ENCODE measurements at regions of chr7 and their contacts with region 1.

Region 1: DNA sequence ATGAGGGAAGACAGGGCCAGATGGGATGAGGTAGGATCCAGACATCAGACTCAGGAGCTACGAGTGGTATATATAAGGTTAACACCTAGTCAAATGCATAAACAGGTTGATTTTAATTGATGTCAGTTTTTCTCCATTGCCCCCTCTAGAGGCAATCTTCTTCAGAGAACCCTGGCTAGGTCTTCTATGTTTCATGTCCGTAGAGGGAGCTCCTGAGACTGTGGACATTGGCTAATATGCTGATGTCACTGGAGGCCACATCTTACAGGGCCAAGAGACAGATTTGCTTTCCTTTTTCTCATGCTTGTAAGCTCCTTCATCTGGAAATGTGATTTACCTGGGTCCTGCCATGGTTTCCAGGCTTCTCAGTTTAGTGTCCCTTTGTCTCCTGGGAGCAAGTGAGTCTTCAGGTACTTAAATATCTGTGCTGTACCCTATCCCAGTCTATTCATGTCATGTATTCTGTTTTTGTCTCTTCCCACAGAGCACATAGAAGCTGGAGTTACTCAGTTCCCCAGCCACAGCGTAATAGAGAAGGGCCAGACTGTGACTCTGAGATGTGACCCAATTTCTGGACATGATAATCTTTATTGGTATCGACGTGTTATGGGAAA is 161.6 kb upstream of the PRSS1 start:
- DNase-seq: peak; percentile 87 to 88 (median 88)
- H3K4me3 ChIP-seq: no peak overlapping the region
- H3K27ac ChIP-seq: no peak overlapping the region
- H3K4me1 ChIP-seq: peaks cover 2 to 27% (median 22%) of the 10 kb centered on the region in 4 experiments
- H3K27me3 ChIP-seq: no peaks in the 10 kb centered on the region

Region 2: GRCh38 chr7:142459551-142459963 is 128.1 kb before region 1 on chr7:
- CTCF ChIA-PET with region 1: interaction called, 17 read pairs
- POLR2A ChIA-PET with region 1: no interaction called
- DNase-seq: peak; percentile 83 to 89 (median 83)
- H3K4me3 ChIP-seq: peak overlapping the region in 1 of 7 experiments; percentile 36
- H3K27ac ChIP-seq: peak overlapping the region; percentile 27 to 31
- H3K4me1 ChIP-seq: peaks cover 9 to 80% (median 67%) of the 10 kb centered on the region in 4 experiments
- H3K27me3 ChIP-seq: no peaks in the 10 kb centered on the region

Region 3: DNA sequence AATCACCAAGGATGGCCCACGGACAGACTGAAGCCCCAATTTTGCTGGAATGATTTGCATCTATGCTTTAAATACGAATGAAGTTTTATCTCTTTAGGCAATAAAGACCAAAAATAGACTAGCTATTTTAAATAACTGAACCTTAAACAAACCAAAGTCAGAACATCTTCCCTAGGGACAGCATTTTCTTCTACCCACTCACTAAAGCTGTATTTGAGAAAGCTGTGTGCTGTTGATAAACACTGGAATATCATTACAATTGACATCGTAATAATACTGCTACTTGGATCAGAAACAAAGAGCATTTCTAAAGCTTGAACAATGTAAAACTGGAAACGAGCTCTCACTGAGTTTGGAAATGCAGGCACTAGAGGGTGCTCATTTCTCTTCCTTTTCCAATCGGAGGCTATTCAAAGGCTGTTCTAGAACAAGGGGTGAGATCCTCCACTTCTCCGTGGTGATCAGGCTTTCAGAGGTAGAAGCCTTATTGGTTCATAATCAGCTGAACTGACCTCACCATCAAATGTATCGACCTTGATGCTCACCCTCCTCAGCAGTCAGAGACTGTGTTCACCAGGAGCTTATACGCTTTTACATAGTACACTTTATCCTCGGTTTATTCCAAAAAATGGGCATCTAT is 63.7 kb before region 1 on chr7:
- CTCF ChIA-PET with region 1: interaction called, 48 read pairs
- POLR2A ChIA-PET with region 1: no interaction called
- DNase-seq: peak in 2 of 3 donors; percentile 28 to 32
- H3K4me3 ChIP-seq: no peak overlapping the region
- H3K27ac ChIP-seq: no peak overlapping the region
- H3K4me1 ChIP-seq: peaks cover 0 to 9% (median 5%) of the 10 kb centered on the region in 4 experiments
- H3K27me3 ChIP-seq: no peaks in the 10 kb centered on the region

Region 4: DNA sequence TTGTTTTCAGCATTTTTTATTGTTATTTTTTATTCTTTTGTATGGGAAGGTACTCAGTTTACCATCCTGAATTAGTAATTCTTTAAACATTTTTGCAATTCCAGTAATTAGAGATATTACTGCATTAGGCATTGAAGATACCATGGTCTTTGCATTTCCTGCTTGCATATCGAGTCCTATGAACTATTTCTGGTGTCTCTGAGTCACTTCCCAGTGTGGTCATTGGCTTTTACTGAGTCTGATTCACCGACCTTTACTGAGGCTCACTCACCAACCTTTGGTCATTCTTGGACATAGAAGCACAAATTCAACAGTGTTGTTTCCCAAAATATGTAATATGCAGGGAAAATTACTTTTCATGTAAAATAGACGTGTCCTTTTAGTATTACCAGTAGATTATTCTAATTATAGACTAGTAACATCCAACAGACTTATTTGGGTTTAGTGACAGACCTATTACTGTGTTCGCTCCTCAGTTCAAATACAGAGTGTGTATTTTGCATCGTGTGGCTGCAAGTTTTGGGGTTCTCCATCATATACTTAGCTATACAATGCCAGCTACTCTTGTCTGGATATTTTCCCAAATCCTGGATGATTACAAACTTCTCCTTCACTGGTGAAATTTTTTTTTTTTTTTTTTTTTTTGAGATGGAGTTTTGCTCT is 19.1 kb before region 1 on chr7:
- CTCF ChIA-PET with region 1: interaction called, 260 read pairs
- POLR2A ChIA-PET with region 1: no interaction called
- DNase-seq: peak in 2 of 3 donors; percentile 58 to 78
- H3K4me3 ChIP-seq: no peak overlapping the region
- H3K27ac ChIP-seq: no peak overlapping the region
- H3K4me1 ChIP-seq: peaks cover 5 to 63% (median 50%) of the 10 kb centered on the region in 4 experiments
- H3K27me3 ChIP-seq: no peaks in the 10 kb centered on the region

Region 5: GRCh38 chr7:142603870-142604448 is 16.3 kb after region 1 on chr7:
- CTCF ChIA-PET with region 1: interaction called, 20 read pairs
- POLR2A ChIA-PET with region 1: no interaction called
- DNase-seq: peak; percentile 68 to 87 (median 83)
- H3K4me3 ChIP-seq: no peak overlapping the region
- H3K27ac ChIP-seq: no peak overlapping the region
- H3K4me1 ChIP-seq: peaks cover 0 to 29% (median 22%) of the 10 kb centered on the region in 4 experiments
- H3K27me3 ChIP-seq: no peaks in the 10 kb centered on the region